Activated CD4-positive, alpha-beta T cell treated with anti-CD3 and anti-CD28 coated beads, Interleukin-2, amount 10 ng/mL, durations not matched to agents 7 days and 5 days (primary cell): ENCODE measurements at regions of chr12 and their contacts with region 1.

Region 1: DNA sequence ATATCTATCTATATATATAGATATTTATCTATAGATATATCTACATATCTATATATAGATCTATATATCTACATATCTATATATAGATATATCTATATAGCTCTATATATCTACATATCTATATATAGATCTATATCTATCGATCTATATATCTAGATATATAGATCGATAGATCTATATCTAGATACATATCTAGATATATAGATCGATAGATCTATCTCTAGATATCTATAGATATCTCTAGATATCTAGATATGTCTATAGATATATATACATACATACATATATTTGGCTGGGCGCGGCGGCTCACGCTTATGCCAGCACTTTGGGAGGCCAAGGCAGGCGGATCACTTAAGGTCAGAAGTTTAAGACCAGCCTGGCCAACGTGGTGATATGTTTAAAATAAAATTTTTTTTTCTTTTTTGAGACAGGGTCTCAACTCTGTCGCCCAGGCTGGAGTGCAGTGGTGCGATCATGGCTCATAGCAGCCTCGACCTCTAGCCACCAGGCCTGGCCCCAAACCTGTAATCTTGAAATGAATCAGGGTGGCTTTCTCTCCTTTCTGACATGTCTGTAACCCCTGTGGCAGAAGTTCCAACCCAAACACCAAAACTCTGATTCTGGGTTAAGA is 18.1 kb downstream of the ARPC3 start:
- DNase-seq: no peak
- H3K4me3 Mint-ChIP-seq: no peak overlapping the region
- H3K27ac Mint-ChIP-seq: peak overlapping the region; percentile 22
- H3K4me1 Mint-ChIP-seq: peaks cover 12% of the 10 kb centered on the region
- H3K27me3 Mint-ChIP-seq: no peaks in the 10 kb centered on the region

Region 2: DNA sequence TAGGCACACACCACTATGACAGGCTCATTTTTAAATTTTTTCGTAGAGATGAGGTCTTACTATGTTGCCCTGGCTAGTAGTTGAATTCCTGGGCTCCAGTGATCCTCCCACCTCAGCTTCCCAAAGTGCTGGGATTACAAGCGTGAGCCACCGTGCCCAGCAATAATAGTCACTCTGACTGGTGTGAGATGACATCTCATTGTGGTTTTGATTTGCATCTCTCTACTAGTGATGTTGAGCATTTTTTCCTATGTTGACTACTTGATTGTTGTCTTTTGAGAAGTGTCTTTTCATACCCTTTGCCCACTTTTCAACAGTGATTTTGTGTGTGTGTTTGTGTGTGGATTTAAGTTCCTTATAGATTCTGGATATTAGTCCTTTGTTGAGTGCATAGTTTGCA is 124.7 kb before region 1 on chr12:
- CTCF ChIA-PET with region 1: no interaction called
- POLR2A ChIA-PET with region 1: no interaction called
- DNase-seq: no peak
- H3K4me3 Mint-ChIP-seq: no peak overlapping the region
- H3K27ac Mint-ChIP-seq: peak overlapping the region; percentile 13
- H3K4me1 Mint-ChIP-seq: peaks cover 50% of the 10 kb centered on the region
- H3K27me3 Mint-ChIP-seq: no peaks in the 10 kb centered on the region

Region 3: DNA sequence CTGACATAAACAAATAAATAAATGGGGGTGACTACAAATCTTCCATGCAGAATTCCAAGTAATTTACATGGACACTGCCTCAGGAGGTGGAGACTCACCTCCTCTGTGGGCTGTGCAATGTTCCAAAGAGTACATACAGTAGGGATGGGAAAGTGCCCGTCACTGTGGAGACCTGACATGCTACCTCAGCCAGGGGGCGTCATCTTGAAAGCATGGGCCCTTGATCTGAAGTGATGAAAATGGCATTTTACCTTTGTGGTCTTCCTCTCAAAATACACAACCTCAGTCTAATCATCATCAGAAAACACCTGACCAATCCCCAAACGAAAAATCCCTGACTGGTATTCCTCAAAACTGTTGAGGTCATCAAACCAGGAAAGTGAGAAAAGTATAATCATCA is 77.0 kb before region 1 on chr12:
- CTCF ChIA-PET with region 1: interaction called, 10 read pairs
- POLR2A ChIA-PET with region 1: no interaction called
- DNase-seq: peak; percentile 42
- H3K4me3 Mint-ChIP-seq: no peak overlapping the region
- H3K27ac Mint-ChIP-seq: no peak overlapping the region
- H3K4me1 Mint-ChIP-seq: peaks cover 26% of the 10 kb centered on the region
- H3K27me3 Mint-ChIP-seq: no peaks in the 10 kb centered on the region

Region 4: GRCh38 chr12:110403146-110403975 is 28.7 kb before region 1 on chr12 and contains the start of gene ANAPC7:
- CTCF ChIA-PET with region 1: interaction called, 13 read pairs
- POLR2A ChIA-PET with region 1: interaction called, 6 read pairs
- DNase-seq: peak; percentile 88
- H3K4me3 Mint-ChIP-seq: peak within 1 kb of the TSS; percentile 100
- H3K27ac Mint-ChIP-seq: peak within 1 kb of the TSS; percentile 100
- H3K4me1 Mint-ChIP-seq: peaks cover 37% of the 10 kb centered on the region
- H3K27me3 Mint-ChIP-seq: no peaks in the 10 kb centered on the region
- total RNA-seq, gene ANAPC7: 61.8 to 67.7 TPM

Region 5: DNA sequence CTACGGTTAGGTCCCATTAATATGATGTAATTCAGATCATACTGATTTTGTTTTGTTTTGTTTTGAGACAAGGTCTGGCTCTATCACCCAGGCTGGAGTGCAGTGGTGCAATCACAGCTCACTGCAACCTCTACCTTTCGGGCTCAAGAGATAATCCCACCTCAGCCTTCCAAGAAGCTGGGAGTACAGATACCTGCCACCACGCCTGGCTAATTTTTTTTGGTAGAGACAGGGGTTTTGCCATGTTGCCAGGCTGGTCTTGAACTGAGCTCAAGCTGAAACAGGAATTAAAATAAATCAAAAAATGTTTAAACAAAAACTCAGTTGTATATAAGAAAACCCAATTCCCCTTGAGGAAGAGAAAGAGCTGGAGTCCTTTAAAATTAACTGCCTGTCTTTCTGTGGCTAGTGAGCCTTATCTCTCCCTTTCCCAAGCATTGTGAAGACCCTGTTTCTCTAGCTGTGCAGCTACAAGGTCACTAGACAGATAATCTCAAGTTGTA is 10.9 kb before region 1 on chr12:
- CTCF ChIA-PET with region 1: interaction called, 17 read pairs
- POLR2A ChIA-PET with region 1: no interaction called
- DNase-seq: no peak
- H3K4me3 Mint-ChIP-seq: no peak overlapping the region
- H3K27ac Mint-ChIP-seq: no peak overlapping the region
- H3K4me1 Mint-ChIP-seq: no peaks in the 10 kb centered on the region
- H3K27me3 Mint-ChIP-seq: peaks cover 28% of the 10 kb centered on the region

Region 6: DNA sequence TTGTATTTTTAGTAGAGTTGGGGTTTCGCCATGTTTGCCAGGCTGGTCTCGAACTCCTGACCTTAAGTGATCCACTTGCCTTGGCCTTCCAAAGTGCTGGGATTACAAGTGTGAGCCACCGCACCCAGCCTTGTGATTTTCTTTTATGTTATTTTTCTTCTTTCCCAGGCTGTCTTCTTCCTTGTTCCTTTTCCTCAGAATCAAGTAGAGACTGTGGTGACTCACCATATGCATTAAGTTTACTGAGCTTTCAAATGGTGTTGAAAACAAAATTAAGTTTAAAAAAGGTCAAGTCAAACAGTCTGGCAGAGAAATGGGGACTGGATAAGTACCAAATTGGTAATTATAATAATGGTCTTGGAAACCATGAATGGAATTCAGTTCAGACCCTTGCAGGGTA is 12.4 kb after region 1 on chr12:
- CTCF ChIA-PET with region 1: interaction called, 43 read pairs
- POLR2A ChIA-PET with region 1: interaction called, 7 read pairs
- DNase-seq: no peak
- H3K4me3 Mint-ChIP-seq: no peak overlapping the region
- H3K27ac Mint-ChIP-seq: peak overlapping the region; percentile 2
- H3K4me1 Mint-ChIP-seq: peaks cover 36% of the 10 kb centered on the region
- H3K27me3 Mint-ChIP-seq: no peaks in the 10 kb centered on the region

Region 7: DNA sequence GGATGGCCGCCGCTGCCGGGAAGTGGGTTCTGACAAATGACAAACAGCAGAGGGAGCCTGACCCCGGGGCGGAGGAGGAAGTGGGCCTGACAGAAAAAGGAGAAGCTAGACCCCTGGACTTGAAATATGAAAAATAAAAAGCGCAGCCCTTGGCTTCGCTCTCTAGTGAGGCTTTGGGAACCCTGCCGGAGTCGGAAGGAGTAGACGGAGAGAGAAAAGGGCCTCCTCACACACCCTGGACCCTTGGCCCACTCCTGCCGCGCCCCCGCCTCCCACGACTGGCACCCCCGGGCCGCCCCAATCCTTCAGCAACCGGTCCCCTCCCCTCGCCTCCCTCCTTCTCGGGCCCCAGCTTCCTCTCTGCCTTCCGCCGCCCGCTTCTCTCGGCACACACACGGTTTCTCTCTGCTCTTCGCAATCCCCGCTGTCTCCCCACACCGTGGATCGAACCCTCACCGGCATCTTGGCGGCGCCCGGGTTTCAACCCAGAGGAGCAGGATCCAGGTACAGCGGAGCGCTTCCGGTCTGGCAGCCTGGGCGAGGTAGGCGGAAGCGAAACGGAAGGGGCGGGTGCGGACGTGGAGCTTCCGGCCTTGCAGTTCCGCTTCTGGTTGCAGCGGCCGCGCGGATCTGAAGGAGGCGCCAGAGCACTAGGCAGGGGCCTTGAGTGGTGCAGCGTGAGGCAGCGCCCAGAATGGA is 17.9 kb after region 1 on chr12 and contains the start of gene ARPC3:
- CTCF ChIA-PET with region 1: interaction called, 43 read pairs
- POLR2A ChIA-PET with region 1: interaction called, 7 read pairs
- DNase-seq: peak; percentile 97
- H3K4me3 Mint-ChIP-seq: peak within 1 kb of the TSS; percentile 100
- H3K27ac Mint-ChIP-seq: peak within 1 kb of the TSS; percentile 100
- H3K4me1 Mint-ChIP-seq: peaks cover 49% of the 10 kb centered on the region
- H3K27me3 Mint-ChIP-seq: no peaks in the 10 kb centered on the region
- total RNA-seq, gene ARPC3: 390 to 425 TPM

Region 8: GRCh38 chr12:110468212-110469048 is 36.4 kb after region 1 on chr12 and contains the starts of genes FAM216A and GPN3:
- CTCF ChIA-PET with region 1: interaction called, 10 read pairs
- POLR2A ChIA-PET with region 1: no interaction called
- DNase-seq: peak; percentile 98
- H3K4me3 Mint-ChIP-seq: peak within 1 kb of the TSS; percentile 98
- H3K27ac Mint-ChIP-seq: peak within 1 kb of the TSS; percentile 97
- H3K4me1 Mint-ChIP-seq: peaks cover 43% of the 10 kb centered on the region
- H3K27me3 Mint-ChIP-seq: no peaks in the 10 kb centered on the region
- total RNA-seq, gene FAM216A: 14.6 to 17.5 TPM
- total RNA-seq, gene GPN3: 19.0 to 21.2 TPM